ENCODE measurements at regions of chr6 and their contacts with region 1.

Region 1: GRCh38 chr6:43263314-43264178 is 20.3 kb downstream of the TTBK1 start:
- DNase-seq: peak; percentile 49 to 74 (median 66)
- ATAC-seq: peak; percentile 93
- H3K4me3 ChIP-seq: no peak overlapping the region
- H3K4me3 Mint-ChIP-seq: peak overlapping the region in 1 of 10 donors; percentile 53
- H3K27ac ChIP-seq: no peak overlapping the region
- H3K27ac Mint-ChIP-seq: peak overlapping the region in 2 of 9 donors; percentile 4 to 43
- H3K4me1 ChIP-seq: no peaks in the 10 kb centered on the region
- H3K4me1 Mint-ChIP-seq: peaks cover 0 to 17% (median 0%) of the 10 kb centered on the region in 7 donors
- H3K27me3 ChIP-seq: no peaks in the 10 kb centered on the region
- H3K27me3 Mint-ChIP-seq: peaks cover 0 to 17% (median 0%) of the 10 kb centered on the region in 5 donors

Region 2: GRCh38 chr6:43334466-43335095 is 71.0 kb after region 1 on chr6:
- CTCF ChIA-PET with region 1: interaction called, 3 read pairs
- POLR2A ChIA-PET with region 1: no interaction called
- intact Hi-C with region 1: loop called (anchors 1 to 10 kb)
- DNase-seq: peak in 1 of 9 donors; percentile 24
- ATAC-seq: no peak
- H3K4me3 ChIP-seq: no peak overlapping the region
- H3K4me3 Mint-ChIP-seq: no peak overlapping the region
- H3K27ac ChIP-seq: no peak overlapping the region
- H3K27ac Mint-ChIP-seq: peak overlapping the region in 5 of 9 donors; percentile 8 to 65 (median 32)
- H3K4me1 ChIP-seq: peaks cover 0 to 15% of the 10 kb centered on the region in 2 donors
- H3K4me1 Mint-ChIP-seq: peaks cover 10 to 38% (median 22%) of the 10 kb centered on the region in 7 donors
- H3K27me3 ChIP-seq: no peaks in the 10 kb centered on the region
- H3K27me3 Mint-ChIP-seq: peaks cover 0 to 3% (median 0%) of the 10 kb centered on the region in 5 donors

Region 3: DNA sequence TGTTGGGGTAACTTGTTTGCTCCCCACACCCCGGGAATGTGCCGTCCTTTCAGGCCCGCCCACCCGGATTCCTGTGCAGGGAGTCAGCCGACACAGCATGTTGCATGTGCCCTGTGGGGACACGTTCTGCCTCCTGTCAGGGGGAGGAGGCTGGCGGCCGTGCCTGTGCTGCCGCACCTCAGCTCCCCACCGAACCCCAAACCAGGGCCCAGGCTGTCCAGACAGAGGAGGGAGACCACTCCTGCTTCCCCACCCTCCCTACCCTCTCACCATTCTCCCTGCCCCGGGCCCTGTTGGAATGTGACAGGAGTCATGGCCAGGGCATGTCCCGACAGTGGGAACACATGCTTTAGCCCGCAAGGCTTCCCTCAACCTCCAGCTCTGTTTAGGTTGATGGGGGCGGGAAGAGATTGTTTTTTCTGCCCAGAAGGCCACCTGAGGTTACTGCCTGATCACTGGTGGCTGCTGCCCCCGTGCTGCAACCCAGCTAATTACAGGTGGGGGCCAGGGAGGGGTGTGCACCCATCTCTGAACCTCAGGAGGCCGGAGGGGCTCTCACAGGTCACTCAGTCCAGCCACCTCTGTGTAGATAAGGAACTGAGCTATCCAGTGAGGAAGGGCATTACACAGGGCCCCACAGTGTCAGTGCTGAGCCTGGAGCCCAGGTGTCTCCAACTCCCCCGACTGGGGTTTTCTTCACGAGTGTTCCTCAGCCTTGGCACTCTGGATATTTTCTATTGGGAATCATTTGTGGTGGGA is 233.0 kb after region 1 on chr6:
- CTCF ChIA-PET with region 1: interaction called, 3 read pairs
- POLR2A ChIA-PET with region 1: no interaction called
- intact Hi-C with region 1: loop called in 1 of 2 experiments (anchors 2 kb)
- DNase-seq: no peak
- ATAC-seq: no peak
- H3K4me3 ChIP-seq: no peak overlapping the region
- H3K4me3 Mint-ChIP-seq: no peak overlapping the region
- H3K27ac ChIP-seq: peak overlapping the region; percentile 36
- H3K27ac Mint-ChIP-seq: peak overlapping the region in 1 of 9 donors; percentile 38
- H3K4me1 ChIP-seq: peaks cover 12 to 15% of the 10 kb centered on the region in 2 donors
- H3K4me1 Mint-ChIP-seq: peaks cover 15 to 38% (median 27%) of the 10 kb centered on the region in 7 donors
- H3K27me3 ChIP-seq: no peaks in the 10 kb centered on the region
- H3K27me3 Mint-ChIP-seq: no peaks in the 10 kb centered on the region

Region 4: GRCh38 chr6:43506667-43507471 is 243.3 kb after region 1 on chr6:
- CTCF ChIA-PET with region 1: interaction called, 8 read pairs
- POLR2A ChIA-PET with region 1: no interaction called
- intact Hi-C with region 1: loop called (anchors 1 kb)
- DNase-seq: peak; percentile 61 to 82 (median 70)
- ATAC-seq: peak; percentile 84
- H3K4me3 ChIP-seq: no peak overlapping the region
- H3K4me3 Mint-ChIP-seq: peak overlapping the region in 1 of 10 donors; percentile 29
- H3K27ac ChIP-seq: no peak overlapping the region
- H3K27ac Mint-ChIP-seq: peak overlapping the region in 5 of 9 donors; percentile 24 to 69 (median 58)
- H3K4me1 ChIP-seq: peaks cover 0 to 4% of the 10 kb centered on the region in 2 donors
- H3K4me1 Mint-ChIP-seq: peaks cover 10 to 29% (median 20%) of the 10 kb centered on the region in 7 donors
- H3K27me3 ChIP-seq: peaks cover 0 to 9% of the 10 kb centered on the region in 2 donors
- H3K27me3 Mint-ChIP-seq: peaks cover 15 to 22% (median 19%) of the 10 kb centered on the region in 5 donors